ENCODE measurements at regions of chr4 and their contacts with region 1.

Region 1: DNA sequence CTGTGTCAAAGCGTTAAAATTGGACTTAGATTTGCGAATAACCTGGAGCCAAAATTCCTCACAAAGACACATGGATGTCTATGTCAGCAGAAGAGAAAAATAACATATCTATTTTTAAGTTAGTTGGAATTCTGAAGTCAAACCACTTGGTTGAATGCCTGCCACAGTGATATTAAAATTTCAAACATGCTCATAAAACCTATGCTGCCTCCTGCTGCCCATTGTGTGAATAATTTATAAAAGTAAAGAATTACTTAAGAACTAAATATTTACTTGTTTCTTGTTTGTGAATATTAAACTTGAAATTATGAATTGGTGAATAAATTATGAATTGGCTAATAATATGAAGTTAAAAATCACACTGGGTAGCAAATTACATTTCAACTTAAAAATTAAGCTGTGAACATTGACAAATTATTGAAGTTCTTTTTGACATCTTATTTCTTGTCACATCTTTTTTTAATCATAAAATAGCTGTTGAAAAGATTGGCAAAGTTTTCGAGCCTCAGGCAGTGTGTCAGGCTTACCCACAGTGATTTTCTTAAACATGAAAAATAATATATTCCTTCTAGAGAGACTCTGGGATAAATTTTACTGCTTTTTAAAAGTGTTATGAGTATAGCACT is 35.4 kb downstream of the FABP2 start:
- DNase-seq: no peak
- ATAC-seq: peak; percentile 42

Region 2: GRCh38 chr4:118888666-118889311 is 397.7 kb before region 1 on chr4 and contains the start of gene SYNPO2:
- intact Hi-C with region 1: loop called (anchors 5 kb)
- DNase-seq: peak; percentile 88
- ATAC-seq: peak; percentile 97
- total RNA-seq, gene SYNPO2: 113 TPM

Region 3: DNA sequence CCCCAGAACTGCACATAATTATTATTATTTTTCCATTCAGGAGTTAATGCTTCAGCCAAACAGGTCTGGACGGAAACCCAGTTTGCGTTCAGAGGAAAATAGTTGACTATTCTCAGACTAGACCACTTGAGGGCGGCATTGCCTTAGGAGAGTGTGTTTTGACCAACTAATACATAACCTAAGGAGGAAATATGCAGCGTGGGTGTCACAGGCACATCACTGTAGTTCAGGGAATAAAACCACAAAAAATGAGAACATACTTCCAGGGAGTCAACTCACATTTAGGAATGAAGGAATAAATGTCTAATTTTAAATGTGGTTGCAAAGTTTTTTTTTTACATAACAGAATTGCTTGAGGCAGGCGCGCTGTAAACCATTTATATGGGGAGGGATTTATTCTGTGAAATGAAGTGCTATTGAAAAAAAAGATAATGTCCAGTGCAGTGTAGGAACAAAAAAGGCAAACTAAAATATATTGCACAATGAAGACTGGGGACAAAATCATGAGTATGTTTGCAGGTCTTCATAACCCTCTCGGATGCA is 304.6 kb before region 1 on chr4:
- intact Hi-C with region 1: loop called (anchors 10 kb)
- DNase-seq: peak; percentile 74
- ATAC-seq: peak; percentile 90

Region 4: GRCh38 chr4:119038116-119038841 is 248.2 kb before region 1 on chr4:
- intact Hi-C with region 1: loop called (anchors 10 kb)
- DNase-seq: no peak
- ATAC-seq: peak; percentile 12